ENCODE measurements at regions of chr16 and their contacts with region 1.

Region 1: GRCh38 chr16:10950393-10950792 is 6.0 kb downstream of the CLEC16A start:
- DNase-seq: peak; percentile 72
- H3K4me3 ChIP-seq: no peak overlapping the region
- H3K27ac ChIP-seq: peak overlapping the region; percentile 8
- H3K4me1 ChIP-seq: peaks cover 52% of the 10 kb centered on the region
- H3K27me3 ChIP-seq: no peaks in the 10 kb centered on the region
- CTCF ChIP-seq: no peak

Region 2: DNA sequence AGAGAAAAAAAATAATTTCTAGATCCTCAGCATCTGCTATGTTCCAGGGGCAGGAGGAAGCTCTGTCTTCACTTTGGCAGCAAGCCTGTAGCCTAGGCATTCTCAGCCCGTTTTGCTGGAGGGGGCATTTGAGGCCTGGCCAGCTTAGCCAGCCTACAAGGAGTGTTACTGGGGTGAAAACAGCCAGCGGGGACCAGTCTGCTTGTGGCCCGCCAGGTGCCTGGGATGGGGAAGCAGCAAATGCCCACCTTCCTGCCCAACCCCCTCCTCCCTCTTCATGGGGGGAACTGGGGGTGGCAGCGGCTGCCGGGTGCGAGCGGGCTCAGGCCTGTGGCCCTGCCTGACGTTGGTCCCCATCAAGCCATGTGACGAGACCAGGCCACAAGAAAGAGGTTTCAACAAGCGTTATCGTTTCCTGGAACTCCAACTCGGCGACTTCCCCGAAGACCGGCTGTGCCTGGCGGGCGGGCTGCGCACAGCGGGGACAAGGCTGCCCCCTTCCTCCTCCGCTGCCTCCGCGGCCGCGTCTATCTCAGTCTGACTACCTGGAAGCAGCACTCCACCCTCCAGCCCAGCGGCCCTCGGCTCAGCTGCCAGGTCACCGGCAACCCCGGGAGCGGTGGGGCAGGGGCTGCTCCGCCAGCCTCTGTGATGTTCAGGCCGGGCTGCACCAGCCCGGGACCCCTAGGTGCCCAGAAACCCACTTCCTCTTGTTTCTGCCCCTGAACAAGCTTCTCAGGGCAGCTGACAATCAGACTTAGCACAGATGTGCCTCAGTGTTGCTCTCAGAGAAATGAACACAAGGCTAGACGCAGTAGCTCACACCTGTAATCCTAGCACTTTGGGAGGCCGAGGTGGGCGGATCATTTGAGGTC is 282.7 kb after region 1 on chr16:
- CTCF ChIA-PET with region 1: no interaction called
- dilution Hi-C with region 1: loop called (anchors 5 kb)
- in situ Hi-C with region 1: no loop called
- intact Hi-C with region 1: no loop called
- DNase-seq: no peak
- H3K4me3 ChIP-seq: no peak overlapping the region
- H3K27ac ChIP-seq: no peak overlapping the region
- H3K4me1 ChIP-seq: no peaks in the 10 kb centered on the region
- H3K27me3 ChIP-seq: no peaks in the 10 kb centered on the region
- CTCF ChIP-seq: no peak